GM10248 (cell line): ENCODE measurements at regions of chr3 and their contacts with region 1.

Region 1: GRCh38 chr3:144142151-144142840 is 170.7 kb downstream of the DIPK2A start:
- DNase-seq: no peak
- CTCF ChIP-seq: no peak

Region 2: DNA sequence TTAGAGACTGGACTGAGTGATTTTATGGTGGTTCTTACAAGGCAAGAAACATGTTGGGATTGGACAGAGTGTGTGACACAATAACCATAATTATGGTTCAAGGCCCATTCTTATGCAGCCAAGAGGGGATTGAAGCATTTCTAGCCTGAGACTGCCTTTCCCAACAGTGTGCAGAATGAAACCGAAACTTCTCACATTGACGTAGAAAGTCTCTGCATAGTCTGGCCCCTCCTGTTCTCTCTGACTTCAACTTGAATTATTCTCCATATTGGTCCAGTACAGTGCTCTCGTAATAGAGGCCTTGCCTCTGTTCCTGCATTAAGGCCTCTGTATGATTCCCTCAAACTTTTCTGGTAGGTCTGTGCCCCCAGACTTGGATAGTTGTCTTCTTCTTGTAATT is 32.4 kb before region 1 on chr3:
- CTCF ChIA-PET with region 1: no interaction called
- POLR2A ChIA-PET with region 1: no interaction called
- DNase-seq: no peak
- CTCF ChIP-seq: no peak

Region 3: GRCh38 chr3:144128108-144128892 is 14.0 kb before region 1 on chr3:
- CTCF ChIA-PET with region 1: interaction called, 10 read pairs
- POLR2A ChIA-PET with region 1: no interaction called
- DNase-seq: peak; percentile 54
- CTCF ChIP-seq: no peak